HEK293 (cell line): ENCODE measurements at regions of chr3 and their contacts with region 1.

Region 1: GRCh38 chr3:136075218-136075808 is 109.8 kb downstream of the PPP2R3A start:
- H3K4me3 ChIP-seq: no peak overlapping the region
- H3K27ac ChIP-seq: no peak overlapping the region
- H3K4me1 ChIP-seq: 0 out of 2 replicates have a peak, but pooled peaks cover 5% of the 10 kb centered on the region
- CTCF ChIP-seq: peak; percentile 59

Region 2: GRCh38 chr3:137013955-137014688 is 938.8 kb after region 1 on chr3:
- CTCF ChIA-PET with region 1: interaction called, 19 read pairs
- POLR2A ChIA-PET with region 1: no interaction called
- H3K4me3 ChIP-seq: peak overlapping the region; percentile 1
- H3K27ac ChIP-seq: no peak overlapping the region
- H3K4me1 ChIP-seq: no peaks in the 10 kb centered on the region
- CTCF ChIP-seq: peak; percentile 71